Spleen (tissue), 13 donors: ENCODE measurements at regions of chr1 and their contacts with region 1.

Region 1: DNA sequence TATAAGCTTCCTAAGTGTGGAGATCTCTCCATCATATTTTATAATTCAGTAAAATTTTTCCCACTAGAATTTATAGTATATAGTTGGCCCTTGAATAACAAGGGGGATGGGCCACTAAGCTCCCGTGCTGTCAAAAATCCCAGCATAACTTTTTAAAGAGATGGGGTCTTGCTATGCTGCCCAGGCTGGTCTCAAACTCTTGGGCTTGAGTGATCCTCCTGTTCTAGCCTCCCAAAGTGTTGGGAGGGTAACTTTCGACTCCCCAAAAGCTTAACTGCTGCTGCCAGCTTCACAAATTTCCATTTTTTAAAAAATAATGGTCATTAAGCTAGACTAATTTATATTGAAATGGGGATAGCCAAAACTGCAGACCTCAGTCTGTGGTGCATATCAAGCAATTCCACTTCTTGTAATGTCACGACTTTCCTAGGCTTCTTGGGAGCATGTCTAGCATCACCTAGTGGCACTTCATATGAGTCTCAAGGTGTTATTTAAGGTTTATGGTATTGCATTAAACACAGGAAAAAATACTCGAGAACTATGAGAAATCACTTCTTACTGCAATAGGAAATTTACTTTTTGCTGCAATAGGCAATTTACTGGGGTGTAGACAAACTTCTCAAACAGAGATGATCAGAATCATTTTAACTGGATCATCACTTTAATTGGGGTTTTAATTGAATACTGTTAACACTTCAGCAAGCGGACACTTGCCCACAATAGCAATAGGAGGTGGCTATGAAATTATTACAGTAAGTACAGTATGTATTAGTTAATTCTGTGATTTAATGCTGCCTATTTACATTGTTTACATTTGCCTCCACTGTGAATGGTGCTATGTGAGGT is 19.3 kb upstream of the ACTA1 start:
- DNase-seq: no peak
- H3K4me3 ChIP-seq: no peak overlapping the region
- H3K27ac ChIP-seq: no peak overlapping the region
- H3K4me1 ChIP-seq: no peaks in the 10 kb centered on the region
- H3K27me3 ChIP-seq: no peaks in the 10 kb centered on the region
- CTCF ChIP-seq: peak in 1 of 11 experiments; percentile 12
- POLR2A ChIP-seq: no peak

Region 2: GRCh38 chr1:229287267-229287666 is 165.9 kb before region 1 on chr1:
- intact Hi-C with region 1: loop called (anchors 10 kb)
- DNase-seq: no peak
- H3K4me3 ChIP-seq: no peak overlapping the region
- H3K27ac ChIP-seq: no peak overlapping the region
- H3K4me1 ChIP-seq: peaks cover 0 to 20% (median 7%) of the 10 kb centered on the region in 6 donors
- H3K27me3 ChIP-seq: no peaks in the 10 kb centered on the region
- CTCF ChIP-seq: no peak
- POLR2A ChIP-seq: no peak

Region 3: GRCh38 chr1:230205719-230206198 is 752.6 kb after region 1 on chr1:
- intact Hi-C with region 1: no loop called
- DNase-seq: no peak
- H3K4me3 ChIP-seq: no peak overlapping the region
- H3K27ac ChIP-seq: no peak overlapping the region
- H3K4me1 ChIP-seq: peaks cover 0 to 36% (median 21%) of the 10 kb centered on the region in 6 donors
- H3K27me3 ChIP-seq: no peaks in the 10 kb centered on the region
- CTCF ChIP-seq: no peak
- POLR2A ChIP-seq: no peak